IMR-90 (cell line): ENCODE measurements at regions of chr16 and their contacts with region 1.

Region 1: GRCh38 chr16:4116337-4117249 is at the start of gene ADCY9:
- DNase-seq: peak; percentile 73
- ATAC-seq: peak; percentile 86
- H3K4me3 ChIP-seq: peak within 1 kb of the TSS; percentile 66
- H3K27ac ChIP-seq: peak within 1 kb of the TSS; percentile 69
- H3K4me1 ChIP-seq: peaks cover 21% of the 10 kb centered on the region
- H3K27me3 ChIP-seq: no peaks in the 10 kb centered on the region
- CTCF ChIP-seq: 0 out of 2 replicates have a peak, but pooled peaks have one; percentile 10
- POLR2A ChIP-seq: 0 out of 2 replicates have a peak, but pooled peaks have one; percentile 32
- RAD21 ChIP-seq: no peak; the same call in 1 of the 2 replicates
- total RNA-seq, gene ADCY9: 5.4 and 5.6 TPM in 2 replicates

Region 2: DNA sequence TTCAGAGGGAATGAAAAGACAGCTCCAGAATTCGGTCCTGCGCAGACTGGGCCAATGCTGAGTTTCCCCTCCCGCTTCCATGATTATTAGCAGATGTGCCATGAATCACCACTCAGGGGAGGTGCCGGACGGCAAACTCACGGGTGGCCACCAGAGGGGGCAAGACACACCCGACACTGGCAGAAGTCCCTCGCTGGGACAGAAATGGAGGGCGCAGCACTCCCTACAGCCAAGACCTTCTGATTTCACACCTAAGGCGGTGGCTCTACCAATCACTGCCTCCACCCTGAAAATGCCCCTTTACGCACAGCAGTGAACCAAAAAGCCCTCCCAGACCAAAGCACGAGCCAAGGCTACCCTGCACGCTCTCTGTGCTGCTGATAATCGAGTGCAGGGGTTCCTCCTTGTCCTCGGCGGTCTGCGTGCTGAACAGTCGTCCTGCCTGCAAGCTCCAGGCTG is 426.1 kb before region 1 on chr16:
- CTCF ChIA-PET with region 1: no interaction called
- POLR2A ChIA-PET with region 1: no interaction called
- dilution Hi-C with region 1: no loop called
- in situ Hi-C with region 1: no loop called
- intact Hi-C with region 1: loop called (anchors 10 kb)
- DNase-seq: peak; percentile 94
- ATAC-seq: peak; percentile 98
- H3K4me3 ChIP-seq: no peak overlapping the region
- H3K27ac ChIP-seq: no peak overlapping the region
- H3K4me1 ChIP-seq: peaks cover 6% of the 10 kb centered on the region
- H3K27me3 ChIP-seq: no peaks in the 10 kb centered on the region
- CTCF ChIP-seq: peak; percentile 96
- POLR2A ChIP-seq: no peak
- RAD21 ChIP-seq: peak; percentile 84

Region 3: DNA sequence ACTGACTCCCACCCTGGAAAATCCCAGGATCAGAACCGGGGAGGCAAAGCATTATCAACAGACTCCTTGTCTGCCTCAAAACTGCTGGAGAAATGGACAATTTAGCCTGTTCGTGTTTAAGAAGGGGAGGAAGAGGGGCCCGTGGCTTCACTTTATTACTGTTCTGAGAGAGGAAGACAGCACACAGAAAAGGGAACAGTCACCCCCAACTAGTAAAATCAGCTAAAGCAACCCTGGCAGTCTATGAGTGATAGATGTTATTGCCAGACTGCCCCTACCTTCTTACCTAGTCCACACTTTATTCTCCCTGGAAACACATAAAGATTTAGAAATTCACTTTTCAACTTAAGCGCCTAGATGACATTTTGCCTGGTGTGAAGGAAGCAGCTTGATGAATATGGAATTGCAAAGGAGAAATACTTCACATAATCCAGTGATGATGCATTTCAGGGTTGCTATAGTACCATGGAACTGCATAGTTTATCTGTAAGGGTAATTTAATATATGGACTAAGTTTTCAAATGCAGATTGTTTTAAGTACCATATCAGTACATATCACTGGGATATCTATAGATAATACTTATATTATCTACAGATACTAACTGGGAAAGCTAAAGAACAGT is 362.4 kb before region 1 on chr16:
- CTCF ChIA-PET with region 1: no interaction called
- POLR2A ChIA-PET with region 1: no interaction called
- dilution Hi-C with region 1: no loop called
- in situ Hi-C with region 1: no loop called
- intact Hi-C with region 1: no loop called
- DNase-seq: peak; percentile 62
- ATAC-seq: peak; percentile 93
- H3K4me3 ChIP-seq: no peak overlapping the region
- H3K27ac ChIP-seq: peak overlapping the region; percentile 13; the same call in 1 of the 2 replicates
- H3K4me1 ChIP-seq: peaks cover 7% of the 10 kb centered on the region
- H3K27me3 ChIP-seq: no peaks in the 10 kb centered on the region
- CTCF ChIP-seq: no peak
- POLR2A ChIP-seq: no peak
- RAD21 ChIP-seq: no peak

Region 4: GRCh38 chr16:3938848-3939624 is 177.6 kb before region 1 on chr16:
- CTCF ChIA-PET with region 1: interaction called, 3 read pairs
- POLR2A ChIA-PET with region 1: interaction called, 18 read pairs
- dilution Hi-C with region 1: no loop called
- in situ Hi-C with region 1: no loop called
- intact Hi-C with region 1: loop called (anchors 2 kb)
- DNase-seq: peak; percentile 89
- ATAC-seq: peak; percentile 91
- H3K4me3 ChIP-seq: no peak overlapping the region; the same call in none of the 2 replicates
- H3K27ac ChIP-seq: peak overlapping the region; percentile 73
- H3K4me1 ChIP-seq: peaks cover 15% of the 10 kb centered on the region
- H3K27me3 ChIP-seq: no peaks in the 10 kb centered on the region
- CTCF ChIP-seq: peak; percentile 81
- POLR2A ChIP-seq: no peak
- RAD21 ChIP-seq: peak; percentile 75

Region 5: DNA sequence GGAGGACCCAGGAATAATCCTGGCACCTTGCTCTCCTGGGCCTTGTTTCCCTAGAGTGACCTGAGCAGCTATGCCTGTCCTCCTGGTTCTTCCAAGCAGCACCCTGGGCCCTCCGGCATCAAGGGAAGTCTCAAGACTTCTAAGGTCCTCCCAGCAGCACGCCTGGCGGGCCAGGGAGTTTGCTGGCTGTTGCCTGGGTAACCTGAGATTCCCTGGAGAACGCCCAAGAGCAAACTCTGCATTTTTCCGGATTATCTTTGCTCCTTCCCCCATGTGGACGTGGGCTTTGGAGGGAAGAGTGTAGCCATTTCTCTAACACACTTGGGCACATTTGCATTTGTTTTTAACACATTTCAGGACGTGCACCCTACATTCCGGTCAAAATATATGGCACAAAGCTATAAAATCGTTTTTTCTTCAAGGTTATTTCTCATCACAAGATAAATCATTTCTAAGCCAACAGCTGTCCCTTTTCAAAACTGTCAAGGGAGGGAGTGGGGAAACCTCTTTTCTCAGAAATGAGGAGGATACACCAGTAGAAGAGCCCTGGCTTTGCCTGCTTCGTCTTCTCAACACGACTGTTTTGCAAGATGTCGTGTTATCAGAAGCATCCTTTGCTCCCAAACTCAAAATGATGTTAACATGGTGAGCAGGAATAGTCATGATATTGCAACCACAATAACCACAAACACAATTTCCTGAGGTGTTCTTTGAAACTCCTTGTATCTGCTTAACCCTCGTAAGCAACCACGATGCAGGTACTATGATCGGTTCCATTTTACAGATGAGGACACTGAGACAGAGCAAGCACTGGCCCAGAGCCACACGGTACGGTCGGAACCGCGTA is 116.9 kb before region 1 on chr16:
- CTCF ChIA-PET with region 1: no interaction called
- POLR2A ChIA-PET with region 1: no interaction called
- dilution Hi-C with region 1: no loop called
- in situ Hi-C with region 1: no loop called
- intact Hi-C with region 1: loop called (anchors 5 kb)
- DNase-seq: peak; percentile 81
- ATAC-seq: peak; percentile 91
- H3K4me3 ChIP-seq: no peak overlapping the region
- H3K27ac ChIP-seq: peak overlapping the region; percentile 90; the same call in 1 of the 2 replicates
- H3K4me1 ChIP-seq: peaks cover 19% of the 10 kb centered on the region
- H3K27me3 ChIP-seq: no peaks in the 10 kb centered on the region
- CTCF ChIP-seq: no peak
- POLR2A ChIP-seq: no peak
- RAD21 ChIP-seq: 0 out of 2 replicates have a peak, but pooled peaks have one; percentile 15

Region 6: DNA sequence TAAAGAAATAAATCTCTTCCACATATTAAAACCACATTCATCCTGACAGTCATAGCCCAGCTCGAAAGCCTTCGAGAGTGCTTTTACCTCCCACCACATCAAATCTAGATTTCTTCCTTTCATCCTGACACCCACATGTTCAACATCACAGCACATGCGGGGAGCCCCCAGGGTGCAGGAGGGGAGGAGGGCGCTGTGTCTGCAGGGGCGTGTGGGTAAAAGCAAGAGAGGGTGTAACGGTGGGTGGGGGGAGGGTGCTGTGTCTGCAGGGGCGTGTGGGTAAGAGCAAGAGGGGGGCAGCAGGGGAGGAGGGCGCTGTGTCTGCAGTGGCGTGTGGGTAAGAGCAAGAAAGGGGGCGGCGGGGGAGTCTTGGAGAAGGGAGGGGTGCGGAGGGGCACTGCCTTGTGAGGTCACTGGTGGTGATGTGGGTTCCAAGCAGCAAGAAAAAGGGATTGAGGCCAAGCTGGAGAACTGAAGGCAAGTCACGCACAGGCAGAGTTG is 35.0 kb before region 1 on chr16:
- CTCF ChIA-PET with region 1: no interaction called
- POLR2A ChIA-PET with region 1: no interaction called
- dilution Hi-C with region 1: no loop called
- in situ Hi-C with region 1: no loop called
- intact Hi-C with region 1: no loop called
- DNase-seq: peak; percentile 49
- ATAC-seq: peak; percentile 37
- H3K4me3 ChIP-seq: no peak overlapping the region
- H3K27ac ChIP-seq: peak overlapping the region; percentile 14; the same call in 1 of the 2 replicates
- H3K4me1 ChIP-seq: peaks cover 7% of the 10 kb centered on the region
- H3K27me3 ChIP-seq: no peaks in the 10 kb centered on the region
- CTCF ChIP-seq: no peak
- POLR2A ChIP-seq: no peak
- RAD21 ChIP-seq: no peak

Region 7: DNA sequence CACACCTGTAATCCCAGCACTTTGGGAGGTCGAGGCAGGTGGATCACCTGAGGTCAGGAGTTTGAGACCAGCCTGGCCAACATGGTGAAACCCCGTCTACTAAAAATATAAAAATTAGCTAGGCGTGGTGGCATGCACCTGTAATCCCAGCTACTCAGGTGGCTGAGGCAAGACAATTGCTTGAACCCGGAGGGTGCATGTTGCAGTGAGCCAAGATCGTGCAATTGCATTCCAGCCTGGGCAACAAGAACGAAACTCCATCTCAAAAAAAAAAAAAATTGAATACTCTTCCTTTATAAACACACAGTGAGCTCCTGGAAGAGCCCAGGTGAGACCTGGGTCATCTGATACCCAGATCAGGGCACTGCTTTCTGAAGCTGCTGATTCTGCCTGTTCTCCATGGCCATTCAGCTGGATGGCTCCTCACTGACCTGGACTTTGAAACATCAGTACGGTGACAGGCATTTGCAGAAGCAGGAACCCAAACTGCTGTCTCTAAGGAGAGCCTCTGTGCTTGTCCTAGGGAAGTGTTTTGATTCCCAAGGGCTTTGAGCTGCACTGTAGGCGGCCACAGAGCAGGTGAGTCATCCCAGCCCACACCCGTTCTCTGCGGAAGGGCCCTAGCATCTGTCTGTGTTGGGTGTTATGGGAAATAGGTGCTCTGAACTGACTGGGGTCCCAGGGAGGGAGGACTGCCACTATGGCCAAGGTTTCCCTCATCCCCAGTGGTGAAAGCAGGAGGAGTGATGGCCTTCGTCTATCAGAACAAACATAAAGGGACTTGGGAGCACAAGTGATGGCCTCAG is 60.2 kb after region 1 on chr16:
- CTCF ChIA-PET with region 1: no interaction called
- POLR2A ChIA-PET with region 1: interaction called, 22 read pairs
- dilution Hi-C with region 1: no loop called
- in situ Hi-C with region 1: no loop called
- intact Hi-C with region 1: loop called (anchors 2 kb)
- DNase-seq: peak; percentile 73
- ATAC-seq: peak; percentile 67
- H3K4me3 ChIP-seq: no peak overlapping the region
- H3K27ac ChIP-seq: no peak overlapping the region
- H3K4me1 ChIP-seq: peaks cover 13% of the 10 kb centered on the region
- H3K27me3 ChIP-seq: no peaks in the 10 kb centered on the region
- CTCF ChIP-seq: no peak
- POLR2A ChIP-seq: no peak
- RAD21 ChIP-seq: no peak

Region 8: GRCh38 chr16:4253394-4254150 is 137.0 kb after region 1 on chr16:
- CTCF ChIA-PET with region 1: interaction called, 4 read pairs
- POLR2A ChIA-PET with region 1: no interaction called
- dilution Hi-C with region 1: no loop called
- in situ Hi-C with region 1: loop called (anchors 10 kb)
- intact Hi-C with region 1: loop called (anchors 2 kb)
- DNase-seq: peak; percentile 99
- ATAC-seq: peak; percentile 98
- H3K4me3 ChIP-seq: peak overlapping the region; percentile 56
- H3K27ac ChIP-seq: peak overlapping the region; percentile 50
- H3K4me1 ChIP-seq: no peaks in the 10 kb centered on the region
- H3K27me3 ChIP-seq: no peaks in the 10 kb centered on the region
- CTCF ChIP-seq: no peak
- POLR2A ChIP-seq: peak; percentile 90
- RAD21 ChIP-seq: peak; percentile 99